Activated T-helper 2 cell treated with anti-CD3 and anti-CD28 coated beads, Interferon-gamma antibody, Interleukin-2, Interleukin-4, amounts not matched to agents 10 μg/mL and 5 μg/mL and 100 μg/mL, durations not matched to agents 14 hours and 24 hours and 36 hours (primary cell): ENCODE measurements at regions of chr6 and their contacts with region 1.

Region 1: DNA sequence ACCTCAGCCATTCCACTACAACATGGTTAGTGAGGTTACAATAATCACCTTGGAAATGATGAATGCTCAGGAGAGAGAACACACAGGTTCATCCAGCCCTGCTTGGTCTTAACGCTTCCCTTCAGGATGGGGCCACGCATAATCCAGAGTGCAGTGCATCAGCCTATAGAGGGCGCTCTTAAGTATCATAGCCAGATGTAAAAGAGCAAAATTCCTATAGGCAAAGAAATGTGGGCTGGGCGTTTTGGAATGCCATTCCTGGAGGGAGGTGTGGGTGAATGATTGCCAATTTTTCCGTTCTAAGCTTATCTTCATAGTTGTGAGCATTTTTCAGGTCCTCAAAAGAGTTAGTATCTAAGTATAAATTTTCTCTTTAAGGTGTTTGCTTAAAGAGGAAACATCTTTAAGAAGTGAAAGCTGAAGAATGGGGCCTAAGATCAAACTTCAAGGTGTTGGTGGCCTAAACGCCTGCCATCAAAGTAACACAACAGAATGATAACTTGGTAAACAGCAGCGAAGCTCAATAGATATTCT is 1.8 kb downstream of the RIPOR2 start:
- DNase-seq: no peak
- H3K4me3 Mint-ChIP-seq: peak overlapping the region; percentile 89
- H3K27ac Mint-ChIP-seq: peak overlapping the region; percentile 92
- H3K4me1 Mint-ChIP-seq: peaks cover 90% of the 10 kb centered on the region
- H3K27me3 Mint-ChIP-seq: no peaks in the 10 kb centered on the region

Region 2: DNA sequence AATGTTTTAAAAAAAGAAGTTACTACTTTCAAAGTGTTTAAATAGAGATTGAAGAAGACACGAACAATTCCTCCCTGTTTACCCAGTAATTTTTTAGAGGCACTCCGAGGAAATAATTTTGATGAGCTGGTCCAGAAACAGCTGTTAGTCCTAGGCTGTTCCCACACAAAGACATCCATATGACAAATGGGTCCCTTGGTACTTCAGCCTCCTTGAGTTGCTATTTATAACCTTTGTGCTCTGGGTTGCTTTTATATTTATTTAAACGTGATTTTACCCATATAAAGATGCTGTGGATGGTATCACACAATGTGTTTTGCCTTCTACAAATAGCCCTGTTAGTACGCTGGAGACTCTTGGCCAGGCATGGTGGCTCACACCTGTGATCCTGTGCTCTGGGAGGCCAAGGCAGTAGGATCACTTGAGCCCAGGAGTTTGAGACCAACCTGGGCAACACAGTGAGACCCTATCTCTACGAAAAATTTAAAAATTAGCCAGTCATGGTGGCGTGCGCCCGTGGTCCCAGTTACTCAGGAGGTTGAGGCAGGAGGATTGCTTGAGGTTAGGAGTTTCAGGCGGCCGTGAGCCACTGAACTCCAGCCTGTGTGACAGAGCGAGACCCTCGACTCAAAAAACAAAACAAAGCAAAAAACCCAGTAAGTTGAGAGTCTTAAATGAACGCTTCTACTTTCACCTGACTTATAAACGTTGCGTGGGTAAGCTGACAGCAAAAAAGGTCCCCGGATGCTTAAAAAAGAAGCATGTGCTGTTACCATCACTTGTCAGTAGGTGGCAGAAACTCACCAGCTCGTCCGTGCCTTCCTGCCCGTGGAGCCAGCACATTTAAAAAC is 78.3 kb before region 1 on chr6:
- intact Hi-C with region 1: loop called (anchors 1 kb)
- DNase-seq: peak; percentile 57
- H3K4me3 Mint-ChIP-seq: no peak overlapping the region
- H3K27ac Mint-ChIP-seq: peak overlapping the region; percentile 31
- H3K4me1 Mint-ChIP-seq: peaks cover 49% of the 10 kb centered on the region
- H3K27me3 Mint-ChIP-seq: no peaks in the 10 kb centered on the region

Region 3: GRCh38 chr6:24951811-24952299 is 17.9 kb after region 1 on chr6:
- intact Hi-C with region 1: loop called (anchors 1 kb)
- DNase-seq: peak; percentile 51
- H3K4me3 Mint-ChIP-seq: peak overlapping the region; percentile 52
- H3K27ac Mint-ChIP-seq: peak overlapping the region; percentile 28
- H3K4me1 Mint-ChIP-seq: peaks cover 73% of the 10 kb centered on the region
- H3K27me3 Mint-ChIP-seq: no peaks in the 10 kb centered on the region

Region 4: DNA sequence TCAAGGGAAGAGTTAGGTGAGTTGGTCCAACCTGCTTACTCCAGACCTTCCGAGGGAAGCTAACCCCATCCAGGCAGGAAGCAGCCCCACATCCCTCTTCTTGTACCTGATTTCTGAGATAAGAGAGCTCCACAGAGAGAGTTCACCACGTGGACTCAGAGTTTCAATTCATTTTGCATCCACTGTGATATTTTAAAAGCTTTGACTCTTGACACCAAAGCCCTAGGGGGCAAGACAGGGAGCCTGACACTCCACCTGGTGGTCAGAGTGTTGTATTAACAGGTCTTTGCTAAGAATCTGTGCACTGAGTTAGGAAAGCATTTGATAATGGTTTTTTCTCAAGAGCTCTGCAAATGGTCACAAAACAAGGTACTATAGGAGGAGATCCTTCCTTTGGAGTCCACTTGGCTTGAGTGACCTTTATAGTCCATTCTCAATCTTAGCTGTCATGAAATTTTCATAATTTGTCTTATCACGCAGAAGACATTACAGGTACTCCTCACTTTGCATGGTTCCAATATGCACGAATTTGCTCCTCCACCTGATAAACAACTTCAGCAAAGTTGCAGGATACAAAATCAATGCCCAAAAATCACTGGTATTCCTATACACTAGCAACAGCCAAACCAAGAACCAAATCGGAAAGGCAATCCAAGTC is 58.0 kb after region 1 on chr6:
- intact Hi-C with region 1: loop called (anchors 1 kb)
- DNase-seq: peak; percentile 59
- H3K4me3 Mint-ChIP-seq: no peak overlapping the region
- H3K27ac Mint-ChIP-seq: peak overlapping the region; percentile 33
- H3K4me1 Mint-ChIP-seq: peaks cover 30% of the 10 kb centered on the region
- H3K27me3 Mint-ChIP-seq: no peaks in the 10 kb centered on the region

Region 5: GRCh38 chr6:25173951-25174474 is 240.1 kb after region 1 on chr6:
- intact Hi-C with region 1: loop called (anchors 10 kb)
- DNase-seq: no peak
- H3K4me3 Mint-ChIP-seq: no peak overlapping the region
- H3K27ac Mint-ChIP-seq: peak overlapping the region; percentile 70
- H3K4me1 Mint-ChIP-seq: peaks cover 82% of the 10 kb centered on the region
- H3K27me3 Mint-ChIP-seq: no peaks in the 10 kb centered on the region